Calu3 (cell line): ENCODE measurements at regions of chr11 and their contacts with region 1.

Region 1: DNA sequence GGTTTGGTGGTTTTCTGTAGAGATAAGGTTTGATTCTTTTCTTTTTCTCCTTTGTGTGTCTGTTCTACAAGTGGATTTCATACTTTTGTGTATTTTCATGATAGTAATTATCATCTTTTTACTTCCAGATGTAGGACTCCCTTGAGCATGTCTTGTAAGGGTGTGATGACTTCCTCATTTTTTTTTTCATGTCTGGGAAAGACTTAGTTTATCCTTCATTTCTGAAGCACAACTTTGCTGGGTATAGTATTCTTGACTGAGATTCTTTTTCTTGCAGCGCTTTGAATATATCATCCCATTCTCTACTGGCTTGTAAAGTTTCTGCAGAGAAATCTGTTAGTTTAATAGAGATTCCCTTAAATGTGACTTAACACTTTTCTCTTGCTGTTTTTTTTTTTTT is 32.9 kb downstream of the MADD start:
- DNase-seq: no peak
- H3K4me3 Mint-ChIP-seq: no peak overlapping the region
- H3K27ac Mint-ChIP-seq: no peak overlapping the region
- H3K4me1 Mint-ChIP-seq: no peaks in the 10 kb centered on the region
- H3K27me3 Mint-ChIP-seq: no peaks in the 10 kb centered on the region
- CTCF ChIP-seq: no peak

Region 2: DNA sequence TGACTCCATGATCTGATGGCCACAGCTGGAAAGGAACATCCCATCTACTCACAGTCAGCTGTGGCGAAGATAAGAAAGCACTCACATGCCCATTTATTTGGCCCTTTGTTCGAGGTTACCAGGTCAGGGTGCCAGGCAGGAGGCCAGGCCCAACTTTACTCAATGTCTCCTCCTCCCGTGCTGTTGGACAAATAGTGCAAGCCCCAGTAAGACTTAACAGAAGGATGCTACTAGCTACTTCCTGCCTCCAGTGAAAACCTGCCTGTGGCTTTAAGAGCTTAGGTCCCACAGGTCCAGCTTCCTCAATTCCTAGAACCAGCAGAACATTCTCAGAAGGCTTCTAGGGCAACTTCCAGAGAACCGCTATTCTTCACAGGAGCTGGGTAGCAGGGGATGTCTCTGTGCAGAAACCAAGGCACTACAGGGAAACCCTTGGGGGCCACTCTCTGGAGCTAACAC is 1468.5 kb before region 1 on chr11:
- CTCF ChIA-PET with region 1: interaction called, 10 read pairs
- intact Hi-C with region 1: no loop called
- DNase-seq: no peak
- H3K4me3 Mint-ChIP-seq: no peak overlapping the region
- H3K27ac Mint-ChIP-seq: no peak overlapping the region
- H3K4me1 Mint-ChIP-seq: peaks cover 8% of the 10 kb centered on the region
- H3K27me3 Mint-ChIP-seq: peaks cover 56% of the 10 kb centered on the region
- CTCF ChIP-seq: no peak

Region 3: DNA sequence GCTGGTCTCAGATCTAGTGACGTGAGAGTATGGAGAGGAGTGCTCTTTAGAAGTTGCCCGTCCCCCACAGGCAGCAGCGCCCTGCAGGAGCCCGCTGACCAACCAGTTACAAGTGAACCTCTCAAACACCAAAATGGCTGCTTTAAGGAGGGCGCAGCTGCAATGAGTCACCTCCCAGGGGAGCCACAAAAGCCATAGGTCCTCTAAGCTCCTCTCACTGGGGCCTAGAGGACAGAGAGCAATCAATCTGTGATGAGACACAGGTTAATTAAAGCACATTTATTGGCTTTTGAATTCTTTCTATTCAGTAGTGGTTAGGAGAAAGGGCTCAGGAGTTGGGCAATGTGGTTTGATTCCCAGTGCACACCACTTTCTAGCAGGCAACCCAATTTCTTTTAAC is 161.6 kb after region 1 on chr11:
- CTCF ChIA-PET with region 1: no interaction called
- intact Hi-C with region 1: no loop called
- DNase-seq: no peak
- H3K4me3 Mint-ChIP-seq: no peak overlapping the region
- H3K27ac Mint-ChIP-seq: no peak overlapping the region
- H3K4me1 Mint-ChIP-seq: no peaks in the 10 kb centered on the region
- H3K27me3 Mint-ChIP-seq: no peaks in the 10 kb centered on the region
- CTCF ChIP-seq: no peak